IMR-90 (cell line): ENCODE measurements at regions of chr19 and their contacts with region 1.

Region 1: GRCh38 chr19:52637718-52638585 is at the start of gene ZNF83:
- DNase-seq: peak; percentile 91
- ATAC-seq: peak; percentile 98
- H3K4me3 ChIP-seq: peak within 1 kb of the TSS; percentile 85
- H3K27ac ChIP-seq: peak within 1 kb of the TSS; percentile 90
- H3K4me1 ChIP-seq: peaks cover 3% of the 10 kb centered on the region; the same call in 1 of the 2 replicates
- H3K27me3 ChIP-seq: no peaks in the 10 kb centered on the region
- CTCF ChIP-seq: no peak
- POLR2A ChIP-seq: peak; percentile 85
- RAD21 ChIP-seq: no peak
- total RNA-seq, gene ZNF83: 36.9 and 42.8 TPM in 2 replicates

Region 2: GRCh38 chr19:52415411-52416110 is 222.4 kb before region 1 on chr19:
- CTCF ChIA-PET with region 1: no interaction called
- POLR2A ChIA-PET with region 1: no interaction called
- dilution Hi-C with region 1: no loop called
- in situ Hi-C with region 1: no loop called
- intact Hi-C with region 1: no loop called
- DNase-seq: no peak
- ATAC-seq: no peak
- H3K4me3 ChIP-seq: no peak overlapping the region
- H3K27ac ChIP-seq: no peak overlapping the region
- H3K4me1 ChIP-seq: no peaks in the 10 kb centered on the region
- H3K27me3 ChIP-seq: no peaks in the 10 kb centered on the region
- CTCF ChIP-seq: no peak
- POLR2A ChIP-seq: no peak
- RAD21 ChIP-seq: no peak

Region 3: DNA sequence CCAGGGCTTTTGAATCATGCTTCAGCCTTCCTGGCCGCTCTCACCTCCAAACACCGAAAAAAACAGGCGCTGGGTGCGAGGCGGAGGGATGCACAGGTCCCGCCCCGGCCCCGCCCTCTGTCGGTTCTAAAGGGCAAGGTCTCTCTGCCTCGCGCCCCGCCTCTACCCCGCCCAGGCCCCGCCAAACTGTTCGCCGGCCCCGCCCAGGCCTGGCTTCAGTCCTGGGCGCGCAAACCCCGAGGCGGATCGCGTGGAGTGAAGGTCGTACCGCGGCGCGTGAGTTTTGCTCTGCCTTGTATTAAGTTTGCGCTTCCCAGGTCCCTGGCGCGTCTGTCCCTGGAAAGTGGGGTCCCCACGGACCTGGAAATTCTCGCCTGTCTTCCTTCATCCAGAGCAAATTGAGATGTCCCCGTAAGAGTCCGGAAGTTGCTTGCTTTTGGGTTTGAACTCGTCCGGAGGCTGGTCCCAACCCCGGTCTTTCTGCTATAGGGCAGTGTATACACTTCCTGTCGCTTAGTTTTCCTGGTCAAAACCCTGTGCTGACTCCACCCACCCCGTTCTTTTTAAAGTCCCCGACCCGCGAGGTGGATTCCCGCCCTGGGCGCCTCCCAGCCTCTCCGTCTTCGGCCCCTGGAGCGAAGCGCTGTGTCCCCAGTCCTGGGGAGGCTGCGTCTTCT is 102.0 kb before region 1 on chr19:
- CTCF ChIA-PET with region 1: no interaction called
- POLR2A ChIA-PET with region 1: no interaction called
- dilution Hi-C with region 1: no loop called
- in situ Hi-C with region 1: no loop called
- intact Hi-C with region 1: no loop called
- DNase-seq: peak; percentile 61
- ATAC-seq: peak; percentile 99
- H3K4me3 ChIP-seq: peak overlapping the region; percentile 57
- H3K27ac ChIP-seq: peak overlapping the region; percentile 75; the same call in 1 of the 2 replicates
- H3K4me1 ChIP-seq: no peaks in the 10 kb centered on the region; the same call in 1 of the 2 replicates
- H3K27me3 ChIP-seq: no peaks in the 10 kb centered on the region
- CTCF ChIP-seq: no peak
- POLR2A ChIP-seq: no peak
- RAD21 ChIP-seq: no peak

Region 4: DNA sequence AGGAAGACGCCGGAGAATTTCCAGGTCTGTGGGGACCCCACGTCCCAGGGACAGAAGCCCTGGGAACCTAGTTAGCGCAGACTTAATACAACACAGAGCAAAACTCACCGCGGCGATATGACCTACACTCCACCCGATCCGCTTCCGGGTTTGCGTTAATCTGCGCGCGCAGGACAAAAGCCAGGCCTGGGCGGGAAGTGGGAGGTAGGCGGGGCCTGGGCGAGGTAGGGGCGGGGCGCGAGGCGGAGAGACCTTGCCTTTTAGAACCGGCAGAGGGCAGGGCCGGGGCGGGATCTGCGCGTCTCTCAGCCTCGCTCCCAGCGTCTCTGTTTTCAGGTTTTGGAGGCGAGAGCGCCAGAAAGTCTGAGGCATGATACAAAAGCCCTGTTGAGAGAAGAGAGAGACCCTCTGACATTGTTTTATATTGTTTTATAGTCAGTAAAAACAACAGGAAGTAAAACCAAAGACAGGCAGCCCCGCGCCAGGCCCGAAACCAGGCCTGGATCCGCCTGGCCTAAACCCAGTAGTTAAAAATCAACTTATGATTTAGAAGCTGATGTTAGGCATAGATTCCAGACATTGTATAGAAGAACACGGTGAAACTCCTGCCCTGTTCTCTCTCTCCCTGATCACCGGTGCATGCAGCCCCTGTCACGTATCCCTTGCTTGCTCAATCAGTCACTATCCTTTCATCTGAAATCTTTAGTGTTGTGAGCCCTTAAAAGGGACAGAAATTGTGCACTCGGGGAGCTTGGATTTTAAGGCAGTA is 97.1 kb after region 1 on chr19 and contains the start of gene ZNF611:
- CTCF ChIA-PET with region 1: no interaction called
- POLR2A ChIA-PET with region 1: no interaction called
- dilution Hi-C with region 1: no loop called
- in situ Hi-C with region 1: no loop called
- intact Hi-C with region 1: loop called (anchors 1 kb)
- DNase-seq: peak; percentile 88
- ATAC-seq: peak; percentile 99
- H3K4me3 ChIP-seq: peak within 1 kb of the TSS; percentile 89
- H3K27ac ChIP-seq: peak within 1 kb of the TSS; percentile 85
- H3K4me1 ChIP-seq: no peaks in the 10 kb centered on the region; the same call in 1 of the 2 replicates
- H3K27me3 ChIP-seq: no peaks in the 10 kb centered on the region
- CTCF ChIP-seq: peak; percentile 27
- POLR2A ChIP-seq: peak; percentile 77; the same call in 1 of the 2 replicates
- RAD21 ChIP-seq: 0 out of 2 replicates have a peak, but pooled peaks have one; percentile 26
- total RNA-seq, gene ZNF611: 8.1 and 8.8 TPM in 2 replicates